Left cardiac atrium (tissue), 4 donors: ENCODE measurements at regions of chr6 and their contacts with region 1.

Region 1: GRCh38 chr6:137641474-137642077 is 147.4 kb upstream of the OLIG3 start:
- DNase-seq: peak; percentile 76
- ATAC-seq: peak; percentile 89 to 92

Region 2: DNA sequence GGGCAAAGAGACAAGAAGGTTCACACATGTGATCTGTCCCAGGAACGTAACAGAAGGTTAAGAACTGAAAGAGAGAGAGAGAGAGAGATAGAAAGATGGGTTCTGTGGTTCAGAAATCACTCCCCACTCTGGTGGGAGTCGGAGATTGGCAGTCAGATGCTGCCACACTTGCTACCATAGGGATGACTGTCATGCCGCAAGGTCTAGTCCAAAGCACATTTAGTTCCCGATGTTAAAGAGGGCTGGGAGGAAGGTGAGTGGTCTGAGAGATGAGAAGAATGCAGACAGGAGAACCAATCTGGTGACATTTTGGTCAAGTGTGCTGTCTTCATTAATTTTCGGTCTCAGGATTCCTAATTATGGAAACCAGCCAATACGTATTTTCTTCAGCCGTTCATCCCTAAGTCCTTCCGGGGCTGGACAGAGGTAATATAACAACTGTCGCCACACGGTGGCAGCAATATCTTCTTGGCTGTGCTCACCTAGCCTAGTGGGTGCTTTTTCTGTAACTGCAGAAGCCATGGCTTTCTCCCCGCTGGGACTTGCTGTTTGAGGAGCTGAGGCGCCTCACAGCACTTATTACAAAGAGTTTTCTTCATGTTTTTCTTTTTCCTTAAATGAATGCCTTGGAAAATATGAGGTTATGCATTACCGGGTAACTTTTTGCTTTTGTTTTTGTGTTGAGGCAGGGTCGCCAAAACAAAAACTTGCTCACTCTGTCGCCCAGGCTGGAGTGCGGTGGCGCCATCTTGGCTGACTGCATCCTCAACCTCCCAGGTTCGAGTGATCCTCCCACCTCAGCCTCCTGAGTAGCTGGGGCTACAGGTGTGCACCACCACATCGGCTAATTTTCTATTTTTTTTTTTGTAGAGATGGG is 673.5 kb before region 1 on chr6:
- intact Hi-C with region 1: loop called in 1 of 2 experiments (anchors 10 kb)
- DNase-seq: peak; percentile 66
- ATAC-seq: peak; percentile 70 to 85

Region 3: DNA sequence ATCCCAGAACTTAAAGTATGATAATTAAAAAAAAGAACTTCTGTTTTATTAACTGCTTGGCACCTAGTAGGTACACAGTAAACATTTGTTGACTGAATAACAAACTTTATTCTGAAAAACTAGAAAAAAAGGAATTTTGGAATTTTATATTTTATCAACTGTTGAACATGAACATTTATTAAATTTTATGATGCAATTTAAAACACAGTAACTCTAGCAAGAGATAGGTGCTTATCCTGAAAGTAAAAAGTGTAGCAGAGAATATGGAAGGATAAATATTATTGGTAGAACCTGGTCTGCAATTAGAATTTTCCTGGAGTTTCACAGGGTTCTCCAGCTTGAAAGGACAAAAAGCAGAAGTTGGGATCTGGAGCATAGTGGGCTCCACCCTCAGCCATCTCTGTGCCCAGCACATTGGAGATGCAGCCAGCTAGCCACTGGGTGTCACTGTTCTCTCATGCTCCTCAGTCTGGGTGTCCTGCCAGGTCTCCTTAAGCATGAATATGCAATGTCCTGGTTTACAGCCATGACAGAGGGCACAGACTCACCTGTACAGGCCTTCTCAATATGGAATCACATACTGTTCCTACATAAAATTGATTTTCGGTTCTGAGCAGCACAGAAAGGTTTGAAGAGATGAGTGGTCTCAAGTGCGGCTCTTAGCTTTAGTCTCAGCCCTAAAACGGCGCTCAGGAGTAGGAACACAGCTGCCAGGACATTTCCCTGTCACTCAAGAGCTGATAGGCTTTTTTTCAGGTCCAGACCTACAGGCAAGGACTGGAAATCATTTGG is 565.1 kb before region 1 on chr6:
- intact Hi-C with region 1: loop called in 1 of 2 experiments (anchors 5 kb)
- DNase-seq: peak; percentile 72
- ATAC-seq: peak; percentile 97 to 99

Region 4: GRCh38 chr6:137094411-137095008 is 547.1 kb before region 1 on chr6:
- intact Hi-C with region 1: loop called in 1 of 2 experiments (anchors 5 kb)
- DNase-seq: peak; percentile 43
- ATAC-seq: peak; percentile 61 to 69

Region 5: DNA sequence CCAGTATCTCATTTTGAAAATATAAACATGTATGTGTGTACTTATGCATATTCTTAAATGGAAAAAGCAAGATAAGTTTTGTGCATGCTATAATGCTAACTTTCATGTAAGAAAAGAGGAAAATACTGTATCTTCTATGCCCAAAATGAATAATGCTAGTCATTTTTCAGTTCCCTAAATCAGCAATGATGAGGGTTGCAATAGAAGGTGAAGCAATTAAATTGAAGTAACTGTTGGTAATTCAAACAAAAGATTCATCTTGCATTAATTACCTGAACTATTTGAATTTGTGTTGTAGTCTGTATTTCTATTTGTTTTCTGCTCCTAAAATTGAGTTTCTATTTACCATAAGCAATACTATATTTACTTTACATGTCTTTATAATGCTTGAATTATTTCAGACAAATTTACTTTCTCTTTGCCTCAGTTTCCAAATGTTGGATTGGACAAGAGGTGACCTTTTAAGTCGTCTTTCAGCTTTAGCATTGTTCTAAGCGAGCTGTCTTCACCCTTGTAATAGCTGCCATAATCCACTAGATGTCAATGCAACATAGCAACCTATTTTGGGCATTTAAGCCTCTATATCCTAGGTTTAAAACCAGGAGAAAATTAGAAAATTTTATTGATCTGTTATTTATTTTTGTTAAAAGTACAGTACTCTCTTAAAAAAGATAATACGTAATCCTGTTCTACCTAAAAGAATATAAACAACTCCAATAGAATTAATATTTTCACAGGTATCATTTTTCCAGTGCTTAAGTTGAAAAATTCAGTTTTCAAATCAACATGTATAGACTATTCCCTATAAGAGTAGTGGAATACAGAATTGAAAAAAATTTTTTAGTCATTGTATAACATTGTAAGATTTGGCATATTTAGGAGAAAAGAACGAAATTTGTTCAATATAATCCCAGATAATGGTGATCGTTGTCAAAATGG is 370.1 kb before region 1 on chr6:
- intact Hi-C with region 1: loop called (anchors 5 to 10 kb)
- DNase-seq: no peak
- ATAC-seq: peak; percentile 55 to 80

Region 6: GRCh38 chr6:137313928-137314855 is 327.4 kb before region 1 on chr6:
- intact Hi-C with region 1: loop called in 1 of 2 experiments (anchors 5 kb)
- DNase-seq: peak; percentile 80
- ATAC-seq: peak; percentile 93 to 95

Region 7: GRCh38 chr6:137707590-137708360 is 66.2 kb after region 1 on chr6:
- intact Hi-C with region 1: no loop called
- DNase-seq: peak; percentile 55
- ATAC-seq: peak; percentile 64 to 70

Region 8: GRCh38 chr6:138372711-138373463 is 731.3 kb after region 1 on chr6:
- intact Hi-C with region 1: no loop called
- DNase-seq: no peak
- ATAC-seq: no peak